ENCODE measurements at regions of chr1 and their contacts with region 1.

Region 1: GRCh38 chr1:150515328-150516048 is at the start of gene FALEC:
- DNase-seq: peak; percentile 96
- H3K4me3 ChIP-seq: peak within 1 kb of the TSS; percentile 64 to 76 (median 65)
- H3K27ac ChIP-seq: peak within 1 kb of the TSS; percentile 46
- H3K4me1 ChIP-seq: peaks cover 13% of the 10 kb centered on the region
- H3K27me3 ChIP-seq: no peaks in the 10 kb centered on the region
- CTCF ChIP-seq: no peak
- total RNA-seq, gene FALEC: not detected

Region 2: GRCh38 chr1:150259758-150260669 is 255.5 kb before region 1 on chr1:
- CTCF ChIA-PET with region 1: interaction called, 5 read pairs
- dilution Hi-C with region 1: no loop called
- in situ Hi-C with region 1: no loop called
- intact Hi-C with region 1: loop called (anchors 1 kb)
- DNase-seq: peak; percentile 56
- H3K4me3 ChIP-seq: peak overlapping the region in 2 of 3 experiments; percentile 2 to 11
- H3K27ac ChIP-seq: peak overlapping the region; percentile 19
- H3K4me1 ChIP-seq: peaks cover 45% of the 10 kb centered on the region
- H3K27me3 ChIP-seq: no peaks in the 10 kb centered on the region
- CTCF ChIP-seq: no peak

Region 3: DNA sequence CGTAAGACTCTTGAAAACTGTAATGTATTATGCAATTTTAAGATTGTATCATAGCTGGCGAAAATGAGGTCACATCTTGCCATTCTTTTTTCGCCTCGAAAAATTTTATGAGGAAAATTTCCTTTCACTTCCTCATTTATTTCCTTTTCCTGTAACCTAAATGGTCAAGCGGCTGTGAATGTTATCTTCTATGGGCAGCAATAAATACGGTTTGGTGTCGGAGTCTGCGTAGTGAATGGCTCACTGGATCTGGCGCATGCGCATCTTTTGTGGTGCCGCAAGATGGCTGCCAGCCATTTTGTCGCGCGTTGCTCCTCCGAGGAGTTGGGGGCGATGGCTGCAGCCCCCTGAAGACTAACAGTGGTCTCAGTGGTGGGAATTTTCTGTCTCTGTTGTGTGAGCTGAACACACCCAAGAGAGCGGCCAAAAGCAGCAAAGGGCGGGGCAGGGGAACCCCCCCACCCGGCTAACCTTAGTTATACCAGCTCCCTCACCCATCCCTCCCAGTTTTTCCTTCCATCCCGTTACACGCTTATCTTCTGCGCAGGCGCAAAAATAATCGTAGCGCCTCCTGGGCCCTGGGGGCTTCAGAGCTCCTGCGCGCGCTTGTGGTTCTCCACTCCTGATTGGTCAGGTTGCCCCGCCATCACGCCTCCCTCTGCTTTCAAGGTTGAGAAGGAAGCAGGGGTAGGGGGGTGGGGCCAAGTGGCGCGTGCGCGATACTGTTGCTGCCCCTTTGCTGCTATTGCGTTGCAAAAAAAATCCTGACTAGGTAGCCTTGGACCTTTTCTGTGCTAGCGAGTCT is 151.9 kb before region 1 on chr1 and contains the start of gene RPRD2:
- CTCF ChIA-PET with region 1: no interaction called
- dilution Hi-C with region 1: no loop called
- in situ Hi-C with region 1: no loop called
- intact Hi-C with region 1: no loop called
- DNase-seq: peak; percentile 99
- H3K4me3 ChIP-seq: peak within 1 kb of the TSS; percentile 78 to 99 (median 96)
- H3K27ac ChIP-seq: peak within 1 kb of the TSS; percentile 94
- H3K4me1 ChIP-seq: peaks cover 6% of the 10 kb centered on the region
- H3K27me3 ChIP-seq: no peaks in the 10 kb centered on the region
- CTCF ChIP-seq: peak in 1 of 2 donors; percentile 5
- total RNA-seq, gene RPRD2: 12.7 to 22.7 TPM

Region 4: GRCh38 chr1:150387200-150387599 is 128.3 kb before region 1 on chr1:
- CTCF ChIA-PET with region 1: no interaction called
- dilution Hi-C with region 1: loop called (anchors 5 kb)
- in situ Hi-C with region 1: no loop called
- intact Hi-C with region 1: no loop called
- DNase-seq: no peak
- H3K4me3 ChIP-seq: no peak overlapping the region
- H3K27ac ChIP-seq: no peak overlapping the region
- H3K4me1 ChIP-seq: no peaks in the 10 kb centered on the region
- H3K27me3 ChIP-seq: no peaks in the 10 kb centered on the region
- CTCF ChIP-seq: no peak

Region 5: GRCh38 chr1:150410582-150411101 is 104.8 kb before region 1 on chr1:
- CTCF ChIA-PET with region 1: no interaction called
- dilution Hi-C with region 1: no loop called
- in situ Hi-C with region 1: no loop called
- intact Hi-C with region 1: no loop called
- DNase-seq: peak; percentile 83
- H3K4me3 ChIP-seq: no peak overlapping the region
- H3K27ac ChIP-seq: no peak overlapping the region
- H3K4me1 ChIP-seq: no peaks in the 10 kb centered on the region
- H3K27me3 ChIP-seq: no peaks in the 10 kb centered on the region
- CTCF ChIP-seq: no peak

Region 6: GRCh38 chr1:150464422-150464826 is 51.1 kb before region 1 on chr1:
- CTCF ChIA-PET with region 1: no interaction called
- dilution Hi-C with region 1: no loop called
- in situ Hi-C with region 1: no loop called
- intact Hi-C with region 1: loop called (anchors 1 kb)
- DNase-seq: peak; percentile 42
- H3K4me3 ChIP-seq: no peak overlapping the region
- H3K27ac ChIP-seq: no peak overlapping the region
- H3K4me1 ChIP-seq: peaks cover 10% of the 10 kb centered on the region
- H3K27me3 ChIP-seq: no peaks in the 10 kb centered on the region
- CTCF ChIP-seq: peak; percentile 76 to 77

Region 7: DNA sequence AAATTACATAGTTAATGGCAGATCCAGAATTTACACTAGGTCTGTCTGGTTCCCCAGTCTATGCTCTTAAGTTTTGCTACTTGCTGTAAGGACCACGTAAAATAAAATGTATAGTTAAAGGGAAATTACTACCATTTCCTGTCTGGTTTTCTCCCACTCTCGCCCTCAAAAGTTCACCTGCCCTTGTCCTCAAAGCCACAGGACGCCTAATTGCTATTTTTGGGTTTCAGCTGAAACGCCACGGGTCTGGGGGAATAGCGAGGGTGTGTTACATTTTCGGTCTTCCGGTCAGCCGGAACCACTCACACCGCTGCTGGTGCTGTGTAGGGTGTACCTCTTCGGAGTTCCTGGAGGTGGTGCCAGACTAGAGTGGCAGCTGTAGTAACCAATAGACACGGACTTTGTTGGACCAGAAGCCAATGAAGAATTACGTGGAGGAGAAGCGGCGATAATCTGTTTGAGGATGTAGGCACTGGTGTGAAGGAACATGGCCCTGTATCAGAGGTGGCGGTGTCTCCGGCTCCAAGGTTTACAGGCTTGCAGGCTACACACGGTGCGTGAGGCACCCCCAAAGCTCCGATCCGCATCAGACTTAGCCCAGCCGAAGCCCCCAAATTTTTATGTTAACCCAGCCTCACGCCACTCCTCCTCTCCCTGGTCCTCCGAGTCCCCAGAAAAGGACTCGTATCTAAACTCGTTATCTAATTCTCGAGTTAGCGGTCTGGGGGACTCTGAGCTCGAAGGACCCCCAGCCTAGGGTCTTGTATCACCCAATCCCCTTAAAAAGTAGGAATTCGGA is 28.3 kb before region 1 on chr1 and contains the start of gene TARS2:
- CTCF ChIA-PET with region 1: no interaction called
- dilution Hi-C with region 1: no loop called
- in situ Hi-C with region 1: no loop called
- intact Hi-C with region 1: loop called (anchors 1 kb)
- DNase-seq: peak; percentile 97
- H3K4me3 ChIP-seq: peak within 1 kb of the TSS; percentile 66 to 81 (median 69)
- H3K27ac ChIP-seq: peak within 1 kb of the TSS; percentile 83
- H3K4me1 ChIP-seq: peaks cover 16% of the 10 kb centered on the region
- H3K27me3 ChIP-seq: no peaks in the 10 kb centered on the region
- CTCF ChIP-seq: peak in 1 of 2 donors; percentile 29
- total RNA-seq, gene TARS2: 23.3 to 27.0 TPM

Region 8: DNA sequence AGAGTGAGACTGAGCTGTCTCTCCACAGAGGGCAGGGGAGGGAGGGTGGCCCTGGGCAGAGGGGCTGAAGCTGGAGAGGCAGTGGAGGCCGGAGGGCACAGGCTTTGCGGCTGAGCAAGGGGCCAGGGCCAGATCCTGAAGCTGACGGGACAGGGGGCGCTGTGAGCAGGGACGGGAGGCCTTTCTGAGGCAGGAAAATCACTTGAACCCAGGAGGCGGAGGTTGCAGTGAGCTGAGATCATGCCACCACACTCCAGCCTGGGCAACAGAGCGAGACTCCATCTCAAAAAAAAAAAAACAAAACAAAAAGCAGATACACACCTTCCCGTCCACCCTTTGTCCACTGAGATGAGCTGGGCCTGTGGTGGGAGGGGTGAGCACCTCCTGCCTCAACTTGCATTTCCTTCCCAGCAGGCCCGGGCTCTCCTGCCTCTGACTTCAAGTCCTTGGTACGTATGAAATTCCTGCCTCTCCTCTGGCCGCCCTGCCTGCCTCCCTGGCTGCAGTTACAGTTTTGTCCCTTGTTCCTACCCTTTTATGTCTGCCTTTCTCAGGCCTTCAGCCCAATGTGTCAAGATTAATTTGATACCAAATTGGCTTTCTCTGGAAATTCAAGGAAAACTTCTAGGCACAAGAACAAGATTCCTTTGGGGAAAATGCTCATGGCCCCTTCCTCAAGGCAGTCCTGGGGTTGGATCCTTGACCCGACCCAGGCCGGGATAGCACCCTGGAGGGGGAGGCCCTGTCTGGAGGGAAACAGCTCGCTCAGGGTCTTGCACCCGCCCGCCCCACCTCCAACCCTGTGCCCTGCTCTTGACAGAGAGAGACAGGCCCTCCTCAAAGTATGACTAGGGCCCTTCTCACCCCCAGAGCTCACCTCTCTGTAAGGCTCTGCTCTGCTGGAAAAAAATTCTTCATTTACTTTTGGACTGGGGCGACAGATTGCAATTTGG is 22.5 kb after region 1 on chr1:
- CTCF ChIA-PET with region 1: no interaction called
- dilution Hi-C with region 1: no loop called
- in situ Hi-C with region 1: no loop called
- intact Hi-C with region 1: loop called (anchors 2 kb)
- DNase-seq: peak; percentile 74
- H3K4me3 ChIP-seq: no peak overlapping the region
- H3K27ac ChIP-seq: peak overlapping the region; percentile 49
- H3K4me1 ChIP-seq: peaks cover 24% of the 10 kb centered on the region
- H3K27me3 ChIP-seq: no peaks in the 10 kb centered on the region
- CTCF ChIP-seq: no peak

Region 9: GRCh38 chr1:150578965-150579798 is 63.7 kb after region 1 on chr1 and contains the start of gene MCL1:
- CTCF ChIA-PET with region 1: no interaction called
- dilution Hi-C with region 1: loop called (anchors 10 kb)
- in situ Hi-C with region 1: no loop called
- intact Hi-C with region 1: no loop called
- DNase-seq: peak; percentile 96
- H3K4me3 ChIP-seq: peak within 1 kb of the TSS; percentile 77 to 97 (median 85)
- H3K27ac ChIP-seq: peak within 1 kb of the TSS; percentile 89
- H3K4me1 ChIP-seq: peaks cover 19% of the 10 kb centered on the region
- H3K27me3 ChIP-seq: no peaks in the 10 kb centered on the region
- CTCF ChIP-seq: peak in 1 of 2 donors; percentile 9
- total RNA-seq, gene MCL1: 289 to 455 TPM